ENCODE measurements at regions of chr11 and their contacts with region 1.

Region 1: DNA sequence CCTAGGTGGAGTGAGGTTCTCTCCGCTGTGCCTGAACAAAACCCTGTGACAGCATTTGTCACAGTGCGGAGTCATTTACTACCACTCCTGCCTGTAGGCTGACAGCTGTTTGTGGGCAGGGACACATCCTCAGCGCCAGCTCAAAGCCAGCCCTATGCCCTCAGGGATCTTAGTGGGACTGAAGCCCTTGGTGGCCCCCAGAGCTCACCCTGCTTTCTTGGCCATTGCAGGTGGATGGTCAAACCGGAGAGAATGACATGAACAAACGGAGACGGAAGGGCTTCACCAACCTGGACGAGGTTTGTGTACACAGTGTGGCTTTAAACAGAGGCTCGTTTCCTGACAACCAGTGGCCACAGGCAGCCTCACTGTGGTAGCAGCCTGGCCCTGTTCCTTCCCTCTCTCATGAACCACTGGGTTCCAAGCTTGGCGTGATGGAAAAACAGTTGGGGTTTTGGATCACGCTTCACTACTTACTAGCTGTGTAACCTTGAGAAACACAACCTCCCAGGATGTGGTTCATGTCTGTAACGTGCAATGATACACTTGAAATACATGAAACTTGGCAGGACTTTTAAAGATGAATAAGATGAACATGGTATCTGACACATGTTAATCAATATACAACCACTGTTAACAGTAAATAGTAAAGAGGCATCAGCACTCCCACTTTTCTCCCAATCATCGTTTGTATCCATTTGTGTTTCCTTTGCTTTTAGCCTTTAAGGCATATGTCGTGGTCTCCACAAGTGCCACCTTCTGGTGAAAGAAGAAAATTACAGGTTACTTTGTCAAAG is 125.8 kb downstream of the MICAL2 start:
- DNase-seq: peak; percentile 81
- ATAC-seq: peak; percentile 85
- H3K4me3 Mint-ChIP-seq: peak overlapping the region; percentile 32
- H3K27ac Mint-ChIP-seq: peak overlapping the region; percentile 89
- H3K4me1 Mint-ChIP-seq: peaks cover 34% of the 10 kb centered on the region
- H3K27me3 Mint-ChIP-seq: no peaks in the 10 kb centered on the region

Region 2: DNA sequence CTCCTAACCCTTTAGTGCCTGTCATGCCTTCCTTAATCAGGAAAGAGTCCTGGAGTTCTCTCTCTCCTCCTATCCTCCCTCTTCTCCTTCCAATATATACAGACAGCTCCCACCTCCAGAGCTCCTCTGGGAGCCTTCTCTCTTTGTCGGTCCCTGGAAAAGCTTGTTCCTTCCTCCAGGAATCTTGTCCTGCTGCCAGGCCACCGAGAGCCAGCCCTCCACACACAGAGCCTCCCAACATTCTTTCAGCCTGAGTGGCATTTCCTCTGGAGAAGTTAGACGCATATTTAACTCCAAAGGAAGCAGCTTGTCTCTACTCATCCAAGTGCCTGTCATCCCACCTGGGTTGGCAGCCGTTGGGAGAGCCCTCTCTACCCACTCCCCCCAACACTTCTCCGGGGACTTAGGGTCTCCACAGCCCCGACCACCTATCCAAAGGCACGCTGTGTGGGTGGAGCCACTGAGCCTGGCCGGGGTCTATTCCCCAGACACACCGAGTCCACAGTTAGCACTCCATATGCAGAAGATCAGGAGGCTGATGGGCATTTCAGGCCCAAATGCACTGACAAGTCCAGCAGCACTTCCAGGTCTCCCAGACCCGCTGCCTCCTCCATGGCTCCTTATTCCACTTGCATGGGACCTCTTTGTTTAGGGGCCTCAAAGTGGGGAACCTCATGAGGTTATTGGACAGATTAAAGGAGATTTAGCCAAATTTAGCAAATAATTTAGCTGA is 258.8 kb before region 1 on chr11:
- CTCF ChIA-PET with region 1: no interaction called
- POLR2A ChIA-PET with region 1: no interaction called
- DNase-seq: no peak
- ATAC-seq: no peak
- H3K4me3 Mint-ChIP-seq: no peak overlapping the region
- H3K27ac Mint-ChIP-seq: no peak overlapping the region
- H3K4me1 Mint-ChIP-seq: peaks cover 8% of the 10 kb centered on the region
- H3K27me3 Mint-ChIP-seq: no peaks in the 10 kb centered on the region

Region 3: DNA sequence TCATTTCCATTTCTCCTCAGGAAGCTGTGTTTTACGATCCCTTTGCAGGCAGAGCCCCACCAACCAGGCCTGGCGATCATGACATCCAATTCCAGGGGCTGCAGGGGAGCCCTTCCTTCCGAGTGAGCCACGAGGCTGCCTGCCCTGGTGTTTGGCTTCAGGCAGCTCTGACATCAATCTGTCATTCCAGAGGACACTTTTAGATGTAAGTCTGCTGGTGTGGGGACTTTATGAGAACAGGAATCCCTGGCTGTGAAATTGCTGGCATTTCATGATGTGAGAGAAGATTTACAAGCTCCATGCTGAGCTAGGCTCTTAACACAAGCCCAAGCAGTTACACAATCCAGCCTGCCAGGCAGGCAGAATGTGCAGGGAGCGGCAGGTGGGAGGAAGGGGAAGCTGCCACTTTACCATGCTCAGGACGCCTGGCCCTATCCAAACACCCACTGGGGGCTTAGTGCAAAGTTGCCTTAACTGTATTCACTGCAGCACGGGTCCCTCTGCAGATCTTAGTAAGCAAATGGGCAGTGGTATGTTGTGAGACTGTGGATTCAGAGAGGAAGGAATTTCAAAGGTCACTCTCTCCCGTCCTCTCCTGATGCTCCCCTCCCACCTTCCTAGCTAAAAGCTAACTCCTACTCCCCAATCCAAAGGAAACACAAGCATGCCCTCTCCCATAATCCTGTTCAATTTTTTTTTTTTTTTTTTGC is 169.2 kb before region 1 on chr11:
- CTCF ChIA-PET with region 1: interaction called, 11 read pairs
- POLR2A ChIA-PET with region 1: no interaction called
- DNase-seq: no peak
- ATAC-seq: no peak
- H3K4me3 Mint-ChIP-seq: no peak overlapping the region
- H3K27ac Mint-ChIP-seq: no peak overlapping the region
- H3K4me1 Mint-ChIP-seq: peaks cover 16% of the 10 kb centered on the region
- H3K27me3 Mint-ChIP-seq: peaks cover 8% of the 10 kb centered on the region

Region 4: DNA sequence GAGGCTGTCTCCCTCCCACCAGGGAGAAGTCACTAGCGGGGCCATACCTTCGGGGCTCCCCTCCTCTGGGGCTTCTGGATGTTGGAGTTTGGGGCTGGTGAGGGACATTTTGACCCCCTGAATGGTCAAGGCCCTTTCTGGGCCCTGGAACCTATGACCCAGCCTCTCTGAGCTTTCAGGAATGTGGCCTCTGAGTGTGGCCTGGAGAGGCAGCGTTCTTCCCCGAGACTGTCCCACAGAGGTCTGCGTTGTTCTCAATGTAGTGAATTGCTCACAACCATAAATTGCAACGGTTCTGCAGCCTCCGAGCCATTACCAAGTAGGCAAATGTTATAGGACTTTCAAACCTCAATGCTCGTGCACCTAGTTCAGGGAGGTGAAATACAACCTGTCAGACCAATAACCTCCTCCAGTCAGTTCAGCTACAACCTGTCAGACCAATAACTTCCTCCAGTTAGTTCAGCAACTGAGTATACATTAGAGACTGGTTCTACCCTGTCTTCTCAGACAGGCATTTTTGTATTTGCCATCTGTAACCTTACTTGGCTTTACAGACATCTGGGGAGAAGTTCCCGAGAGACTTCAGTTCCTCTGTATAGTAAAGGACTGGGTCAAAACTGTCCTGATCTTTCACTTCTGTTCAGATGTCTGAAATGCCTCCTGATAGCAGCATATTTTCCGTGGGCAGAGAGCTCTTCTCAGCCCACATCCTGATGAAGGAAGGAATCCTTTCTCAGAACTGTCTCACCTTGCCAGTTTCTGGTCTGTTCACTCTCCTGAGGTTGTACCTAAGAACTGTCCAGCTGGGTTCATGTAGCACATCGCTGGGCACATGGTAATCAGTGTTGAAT is 91.6 kb before region 1 on chr11:
- CTCF ChIA-PET with region 1: interaction called, 14 read pairs
- POLR2A ChIA-PET with region 1: no interaction called
- DNase-seq: no peak
- ATAC-seq: peak; percentile 65
- H3K4me3 Mint-ChIP-seq: peak overlapping the region; percentile 21
- H3K27ac Mint-ChIP-seq: peak overlapping the region; percentile 68
- H3K4me1 Mint-ChIP-seq: peaks cover 69% of the 10 kb centered on the region
- H3K27me3 Mint-ChIP-seq: no peaks in the 10 kb centered on the region

Region 5: GRCh38 chr11:12167098-12168000 is 68.8 kb before region 1 on chr11:
- CTCF ChIA-PET with region 1: interaction called, 12 read pairs
- POLR2A ChIA-PET with region 1: interaction called, 3 read pairs
- DNase-seq: no peak
- ATAC-seq: peak; percentile 38
- H3K4me3 Mint-ChIP-seq: no peak overlapping the region
- H3K27ac Mint-ChIP-seq: no peak overlapping the region
- H3K4me1 Mint-ChIP-seq: peaks cover 29% of the 10 kb centered on the region
- H3K27me3 Mint-ChIP-seq: no peaks in the 10 kb centered on the region

Region 6: GRCh38 chr11:12200279-12201010 is 35.7 kb before region 1 on chr11:
- CTCF ChIA-PET with region 1: interaction called, 51 read pairs
- POLR2A ChIA-PET with region 1: interaction called, 8 read pairs
- DNase-seq: no peak
- ATAC-seq: no peak
- H3K4me3 Mint-ChIP-seq: no peak overlapping the region
- H3K27ac Mint-ChIP-seq: no peak overlapping the region
- H3K4me1 Mint-ChIP-seq: peaks cover 57% of the 10 kb centered on the region
- H3K27me3 Mint-ChIP-seq: no peaks in the 10 kb centered on the region

Region 7: DNA sequence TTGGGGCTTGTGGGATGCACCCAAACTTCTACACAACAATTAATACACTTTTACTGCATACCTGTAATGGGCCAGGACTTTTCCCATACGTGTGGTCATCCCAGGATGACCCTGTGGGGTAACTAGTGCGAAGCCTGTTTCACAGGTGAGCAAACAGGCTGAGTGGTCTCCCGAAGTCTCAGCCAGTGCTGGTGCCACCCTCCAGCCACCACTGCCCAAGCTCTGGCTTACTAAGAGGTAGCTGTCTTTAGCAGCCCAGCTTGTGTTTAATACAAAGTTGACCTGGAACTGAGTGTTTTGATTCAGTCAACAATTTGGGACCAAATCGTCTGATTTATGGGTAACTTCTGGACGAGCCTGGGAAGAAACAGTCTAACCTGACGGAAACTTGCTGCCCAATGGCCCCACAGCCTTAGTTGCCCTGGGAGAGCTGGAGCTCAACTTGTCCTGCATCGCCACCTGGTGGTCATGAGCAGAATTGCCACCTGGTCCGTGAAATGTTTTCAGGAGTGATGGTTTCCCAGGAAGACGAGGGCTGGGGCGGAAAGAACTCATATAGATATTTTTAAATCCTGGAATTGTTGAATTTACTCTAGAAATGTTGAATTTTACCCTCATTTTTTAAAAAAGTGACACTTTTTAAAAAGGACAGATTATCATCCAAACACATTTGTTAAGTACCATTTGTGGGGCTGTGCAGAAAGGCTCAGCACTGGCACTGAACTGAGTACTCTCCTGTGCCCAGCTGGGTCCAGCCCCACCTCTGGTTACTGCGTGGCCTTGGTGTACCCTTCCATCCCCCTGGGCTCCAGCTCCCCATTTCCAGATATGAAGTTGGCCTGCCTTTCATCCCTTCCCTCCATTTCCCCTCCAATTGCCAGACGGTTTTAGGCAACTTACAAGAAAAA is 45.7 kb after region 1 on chr11:
- CTCF ChIA-PET with region 1: interaction called, 52 read pairs
- POLR2A ChIA-PET with region 1: interaction called, 3 read pairs
- DNase-seq: peak; percentile 82
- ATAC-seq: peak; percentile 66
- H3K4me3 Mint-ChIP-seq: no peak overlapping the region
- H3K27ac Mint-ChIP-seq: no peak overlapping the region
- H3K4me1 Mint-ChIP-seq: no peaks in the 10 kb centered on the region
- H3K27me3 Mint-ChIP-seq: peaks cover 3% of the 10 kb centered on the region

Region 8: DNA sequence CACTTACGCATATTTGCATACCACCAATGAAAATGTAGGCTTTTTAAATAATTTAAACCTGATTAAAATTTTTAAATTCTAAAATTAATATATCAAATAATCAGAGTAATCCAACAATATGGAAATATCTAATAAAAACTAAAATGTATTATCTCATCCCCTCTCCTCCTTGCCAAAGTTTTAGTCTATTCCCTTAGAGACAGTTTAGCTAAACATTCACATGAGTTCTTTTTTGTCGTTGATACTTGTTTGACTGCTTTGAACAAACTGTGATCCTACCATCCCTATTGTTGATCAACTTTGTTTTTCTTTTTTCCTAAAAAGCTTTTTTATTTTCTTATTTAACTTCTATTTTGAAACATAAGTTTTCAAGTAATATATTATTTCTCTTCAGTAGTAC is 59.8 kb after region 1 on chr11:
- CTCF ChIA-PET with region 1: no interaction called
- POLR2A ChIA-PET with region 1: no interaction called
- DNase-seq: no peak
- ATAC-seq: no peak
- H3K4me3 Mint-ChIP-seq: no peak overlapping the region
- H3K27ac Mint-ChIP-seq: no peak overlapping the region
- H3K4me1 Mint-ChIP-seq: peaks cover 3% of the 10 kb centered on the region
- H3K27me3 Mint-ChIP-seq: no peaks in the 10 kb centered on the region

Region 9: DNA sequence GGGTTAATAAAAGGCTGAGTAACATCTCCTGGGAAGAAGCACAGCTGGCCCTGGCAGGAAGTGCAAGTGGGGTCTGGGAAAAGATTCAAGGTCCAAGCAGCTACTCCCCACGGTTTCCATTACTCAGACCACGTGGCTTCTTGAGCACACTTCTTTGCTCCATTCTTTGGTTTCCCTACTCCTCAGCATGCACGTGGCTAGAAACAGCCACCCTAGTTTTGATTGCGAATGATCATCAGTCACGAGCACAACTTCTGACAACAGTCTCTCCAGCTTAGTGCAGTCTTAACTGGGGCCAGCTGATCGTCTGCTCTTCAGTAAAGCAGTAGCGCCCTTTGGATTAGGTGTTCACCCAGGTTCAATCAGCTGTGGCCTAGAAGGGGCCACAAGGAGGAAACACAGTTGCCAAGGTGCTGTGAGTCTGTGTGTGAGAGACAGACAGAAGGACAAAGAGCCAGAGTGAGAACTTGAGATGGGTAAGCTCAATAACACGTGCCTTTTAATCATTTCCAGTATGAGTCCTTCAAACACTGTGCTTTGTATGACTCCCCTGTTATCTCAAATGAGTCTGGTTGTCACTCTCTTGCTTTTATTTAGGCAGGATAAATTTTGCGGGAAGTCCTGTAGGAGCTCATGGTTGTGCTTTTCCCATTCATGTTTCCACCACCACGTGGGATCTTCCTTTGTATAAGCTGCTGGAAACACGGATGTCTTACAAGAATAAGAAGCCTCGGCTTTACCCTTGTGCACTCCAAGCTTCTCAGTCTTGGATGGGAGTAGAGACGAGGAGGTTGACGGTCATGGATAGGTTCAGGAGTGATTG is 140.3 kb after region 1 on chr11:
- CTCF ChIA-PET with region 1: no interaction called
- POLR2A ChIA-PET with region 1: no interaction called
- DNase-seq: no peak
- ATAC-seq: no peak
- H3K4me3 Mint-ChIP-seq: no peak overlapping the region
- H3K27ac Mint-ChIP-seq: no peak overlapping the region
- H3K4me1 Mint-ChIP-seq: peaks cover 4% of the 10 kb centered on the region
- H3K27me3 Mint-ChIP-seq: peaks cover 56% of the 10 kb centered on the region